Testis (tissue), 5 donors: ENCODE measurements at regions of chr14 and their contacts with region 1.

Region 1: GRCh38 chr14:88551094-88551870 is 3.5 kb downstream of the PTPN21 start:
- DNase-seq: peak; percentile 85
- H3K4me3 ChIP-seq: peak overlapping the region; percentile 55 to 70
- H3K27ac ChIP-seq: peak overlapping the region; percentile 52 to 79
- H3K4me1 ChIP-seq: peaks cover 14% of the 10 kb centered on the region
- H3K27me3 ChIP-seq: no peaks in the 10 kb centered on the region
- CTCF ChIP-seq: peak; percentile 22 to 47 (median 41)
- POLR2A ChIP-seq: no peak

Region 2: GRCh38 chr14:88359500-88359899 is 191.8 kb before region 1 on chr14:
- intact Hi-C with region 1: no loop called
- DNase-seq: no peak
- H3K4me3 ChIP-seq: no peak overlapping the region
- H3K27ac ChIP-seq: no peak overlapping the region
- H3K4me1 ChIP-seq: no peaks in the 10 kb centered on the region
- H3K27me3 ChIP-seq: no peaks in the 10 kb centered on the region
- CTCF ChIP-seq: no peak
- POLR2A ChIP-seq: no peak

Region 3: GRCh38 chr14:88385345-88386101 is 165.8 kb before region 1 on chr14 and contains the start of gene SPATA7:
- intact Hi-C with region 1: loop called (anchors 10 kb)
- DNase-seq: peak; percentile 99
- H3K4me3 ChIP-seq: peak within 1 kb of the TSS; percentile 75 to 79
- H3K27ac ChIP-seq: peak within 1 kb of the TSS; percentile 81 to 87
- H3K4me1 ChIP-seq: peaks cover 13% of the 10 kb centered on the region
- H3K27me3 ChIP-seq: no peaks in the 10 kb centered on the region
- CTCF ChIP-seq: peak in 1 of 3 experiments; percentile 26
- POLR2A ChIP-seq: peak; percentile 23
- total RNA-seq, gene SPATA7: 54.8 to 113 TPM

Region 4: DNA sequence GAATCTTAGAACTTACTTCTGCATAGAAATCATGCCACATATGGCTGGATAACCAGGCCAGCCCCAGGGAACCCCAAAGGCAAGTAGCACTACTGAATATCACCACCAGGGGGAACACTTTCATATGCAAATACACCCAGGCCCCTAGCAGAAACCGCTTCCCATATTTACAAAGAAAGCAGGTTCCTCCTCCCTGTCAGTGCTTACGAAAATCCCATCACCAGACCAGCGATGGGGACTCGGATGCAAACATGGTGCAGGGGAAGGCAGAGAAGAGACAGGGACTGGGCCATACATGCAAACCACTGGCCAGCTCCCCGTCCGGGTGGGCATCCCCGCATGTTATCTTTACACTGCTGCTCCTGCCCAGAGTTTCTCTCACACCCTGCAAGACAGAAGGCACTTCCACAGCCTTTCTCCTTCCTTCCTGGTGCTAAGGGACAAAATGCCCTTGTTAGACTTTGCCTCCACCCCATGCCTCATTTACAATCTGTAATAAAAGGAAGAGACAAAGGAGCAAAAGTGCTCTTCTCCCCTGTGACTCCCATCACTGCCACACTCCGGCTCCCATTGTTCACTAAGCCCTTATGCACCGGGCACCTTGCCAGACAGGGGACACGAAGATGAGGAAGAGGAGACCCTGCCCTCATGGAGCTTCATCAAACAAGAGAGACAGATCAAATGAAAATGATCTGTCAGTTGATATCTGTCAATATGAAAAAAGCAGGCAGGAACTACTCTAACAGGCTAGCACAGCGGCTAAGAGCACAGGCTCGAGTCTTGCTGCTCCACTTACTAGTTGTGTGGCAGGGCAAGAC is 58.8 kb before region 1 on chr14:
- intact Hi-C with region 1: loop called (anchors 10 kb)
- DNase-seq: peak; percentile 89
- H3K4me3 ChIP-seq: no peak overlapping the region
- H3K27ac ChIP-seq: peak overlapping the region; percentile 34
- H3K4me1 ChIP-seq: peaks cover 8% of the 10 kb centered on the region
- H3K27me3 ChIP-seq: no peaks in the 10 kb centered on the region
- CTCF ChIP-seq: peak; percentile 88 to 99 (median 90)
- POLR2A ChIP-seq: no peak